ENCODE measurements at regions of chr2 and their contacts with region 1.

Region 1: DNA sequence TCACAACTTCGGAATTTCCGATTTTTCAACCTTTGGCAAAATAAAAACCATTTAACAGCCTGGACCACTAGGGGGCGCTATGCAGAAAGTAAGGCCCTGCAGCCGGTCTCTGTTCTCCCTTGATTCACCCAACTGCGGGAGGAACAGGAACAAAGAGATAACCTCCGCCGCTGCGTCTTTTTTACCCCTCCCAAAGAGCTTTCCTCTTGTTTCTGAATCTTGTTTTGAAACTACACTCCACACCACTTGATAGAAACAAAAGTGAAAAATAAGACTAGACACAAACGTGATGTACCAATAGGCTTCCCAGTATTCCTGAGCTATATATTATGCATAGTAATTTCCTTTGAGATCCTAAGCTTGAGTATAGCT is 231.2 kb downstream of the MYO3B start:
- DNase-seq: no peak
- ATAC-seq: peak; percentile 81
- H3K4me3 ChIP-seq: no peak overlapping the region
- H3K27ac ChIP-seq: no peak overlapping the region
- H3K4me1 ChIP-seq: peaks cover 11% of the 10 kb centered on the region
- H3K27me3 ChIP-seq: no peaks in the 10 kb centered on the region
- CTCF ChIP-seq: peak; percentile 73 to 85 (median 79)
- EP300 ChIP-seq: no peak
- POLR2A ChIP-seq: no peak
- RAD21 ChIP-seq: peak; percentile 68

Region 2: DNA sequence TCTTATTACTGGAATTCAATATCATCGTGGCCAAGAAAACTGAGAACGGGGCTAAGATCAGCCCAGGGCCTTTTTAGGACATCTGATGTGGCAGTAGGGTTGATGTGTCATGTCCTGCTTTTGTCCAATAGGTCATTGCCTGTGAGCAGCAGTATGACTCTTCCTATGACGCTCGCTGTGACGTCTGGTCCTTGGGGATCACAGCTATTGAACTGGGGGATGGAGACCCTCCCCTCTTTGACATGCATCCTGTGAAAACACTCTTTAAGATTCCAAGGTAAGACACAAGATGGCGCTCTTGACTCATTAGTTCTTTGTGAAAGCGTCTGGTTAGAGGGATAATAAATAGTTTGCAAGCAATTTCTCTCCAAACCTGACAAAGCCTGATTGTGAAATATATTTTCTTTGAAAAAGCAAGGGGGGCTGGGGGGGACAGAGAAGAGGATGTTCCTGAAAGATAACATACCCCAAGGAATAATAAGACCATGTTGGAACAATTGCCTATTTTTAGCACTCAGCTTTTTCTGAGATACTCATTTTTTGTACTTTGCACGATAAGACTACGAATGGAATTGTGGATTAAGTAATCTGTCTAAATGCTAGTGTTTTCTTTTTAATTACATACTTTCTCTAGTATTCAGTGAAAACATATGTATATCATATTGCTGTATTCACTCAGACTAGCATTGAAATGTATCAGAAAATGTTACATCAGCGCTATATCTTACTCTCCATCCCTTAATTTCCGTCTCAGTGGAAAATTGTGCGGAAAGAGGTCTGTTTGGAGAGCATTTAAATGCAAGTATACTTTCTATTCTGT is 173.1 kb before region 1 on chr2:
- CTCF ChIA-PET with region 1: interaction called, 10 read pairs
- POLR2A ChIA-PET with region 1: no interaction called
- RAD21 ChIA-PET with region 1: interaction called, 4 read pairs
- SMC1A ChIA-PET with region 1: interaction called, 12 read pairs
- in situ Hi-C with region 1: no loop called
- intact Hi-C with region 1: no loop called
- DNase-seq: no peak
- ATAC-seq: peak; percentile 88
- H3K4me3 ChIP-seq: no peak overlapping the region
- H3K27ac ChIP-seq: no peak overlapping the region
- H3K4me1 ChIP-seq: no peaks in the 10 kb centered on the region
- H3K27me3 ChIP-seq: no peaks in the 10 kb centered on the region
- CTCF ChIP-seq: peak; percentile 62 to 68 (median 65)
- EP300 ChIP-seq: no peak
- POLR2A ChIP-seq: no peak
- RAD21 ChIP-seq: peak; percentile 91

Region 3: DNA sequence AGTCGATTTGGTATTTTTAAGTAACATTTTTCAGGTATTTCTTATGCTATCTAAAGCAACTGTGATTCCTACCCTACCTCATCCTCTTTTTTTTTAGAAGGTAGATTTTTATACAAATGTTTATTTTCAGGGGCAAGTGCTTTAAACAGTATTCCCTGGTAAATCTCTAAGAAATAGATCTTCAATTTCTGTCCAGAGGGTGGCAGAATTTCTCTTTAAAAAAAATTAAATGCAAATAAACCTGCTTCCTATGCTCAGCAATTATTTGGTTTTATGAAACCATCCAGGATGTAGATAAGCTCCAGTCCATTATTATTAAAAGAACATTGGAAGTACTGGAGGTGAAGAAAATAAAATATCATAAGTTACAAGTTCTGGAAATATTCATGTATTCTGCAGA is 39.3 kb before region 1 on chr2:
- CTCF ChIA-PET with region 1: interaction called, 14 read pairs
- POLR2A ChIA-PET with region 1: no interaction called
- RAD21 ChIA-PET with region 1: interaction called, 3 read pairs
- SMC1A ChIA-PET with region 1: interaction called, 3 read pairs
- in situ Hi-C with region 1: no loop called
- intact Hi-C with region 1: no loop called
- DNase-seq: no peak
- ATAC-seq: 0 out of 3 replicates have a peak, but pooled peaks have one; percentile 36
- H3K4me3 ChIP-seq: no peak overlapping the region
- H3K27ac ChIP-seq: no peak overlapping the region
- H3K4me1 ChIP-seq: no peaks in the 10 kb centered on the region; the same call in 1 of the 2 replicates
- H3K27me3 ChIP-seq: no peaks in the 10 kb centered on the region; a peak in 1 of 4 replicates
- CTCF ChIP-seq: peak in 1 of 3 experiments; percentile 36; a peak in 1 of 6 replicates
- EP300 ChIP-seq: no peak
- POLR2A ChIP-seq: no peak
- RAD21 ChIP-seq: peak; percentile 24; the same call in 1 of the 2 replicates

Region 4: GRCh38 chr2:170396799-170397459 is 12.2 kb before region 1 on chr2:
- CTCF ChIA-PET with region 1: interaction called, 26 read pairs
- POLR2A ChIA-PET with region 1: no interaction called
- RAD21 ChIA-PET with region 1: interaction called, 9 read pairs
- SMC1A ChIA-PET with region 1: interaction called, 8 read pairs
- in situ Hi-C with region 1: no loop called
- intact Hi-C with region 1: no loop called
- DNase-seq: no peak
- ATAC-seq: peak; percentile 71
- H3K4me3 ChIP-seq: no peak overlapping the region
- H3K27ac ChIP-seq: no peak overlapping the region
- H3K4me1 ChIP-seq: no peaks in the 10 kb centered on the region; the same call in 1 of the 2 replicates
- H3K27me3 ChIP-seq: no peaks in the 10 kb centered on the region
- CTCF ChIP-seq: peak; percentile 27 to 51 (median 46); a peak in 3 of 6 replicates
- EP300 ChIP-seq: no peak
- POLR2A ChIP-seq: no peak
- RAD21 ChIP-seq: peak; percentile 47

Region 5: GRCh38 chr2:170449034-170449433 is 39.9 kb after region 1 on chr2:
- CTCF ChIA-PET with region 1: interaction called, 11 read pairs
- POLR2A ChIA-PET with region 1: interaction called, 3 read pairs
- RAD21 ChIA-PET with region 1: no interaction called
- SMC1A ChIA-PET with region 1: interaction called, 4 read pairs
- in situ Hi-C with region 1: no loop called
- intact Hi-C with region 1: no loop called
- DNase-seq: no peak
- ATAC-seq: no peak
- H3K4me3 ChIP-seq: no peak overlapping the region
- H3K27ac ChIP-seq: no peak overlapping the region
- H3K4me1 ChIP-seq: no peaks in the 10 kb centered on the region
- H3K27me3 ChIP-seq: no peaks in the 10 kb centered on the region
- CTCF ChIP-seq: no peak
- EP300 ChIP-seq: no peak
- POLR2A ChIP-seq: no peak
- RAD21 ChIP-seq: no peak

Region 6: DNA sequence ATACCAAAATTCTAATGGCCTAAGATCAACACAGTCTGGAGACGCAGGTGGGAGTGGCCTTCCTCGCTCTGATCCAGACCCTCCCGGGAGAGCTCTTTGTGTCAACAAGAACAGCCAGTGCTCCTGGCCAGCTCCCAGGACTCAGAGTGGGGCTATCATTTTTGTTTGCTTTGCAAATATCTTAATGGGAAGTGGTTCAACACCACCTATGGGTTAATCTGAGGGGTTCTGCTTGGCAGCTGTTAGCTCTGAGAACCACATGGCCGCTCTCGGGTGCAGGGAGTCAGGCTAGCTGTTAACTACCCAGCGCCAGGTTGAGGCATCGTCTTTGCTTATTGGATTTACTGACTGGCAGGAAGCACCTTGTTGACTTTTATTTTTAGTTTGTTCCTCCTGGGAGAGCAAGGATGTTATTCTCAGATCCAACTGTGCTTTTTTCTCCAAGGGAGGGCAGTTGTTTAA is 121.2 kb after region 1 on chr2:
- CTCF ChIA-PET with region 1: interaction called, 27 read pairs
- POLR2A ChIA-PET with region 1: no interaction called
- RAD21 ChIA-PET with region 1: interaction called, 10 read pairs
- SMC1A ChIA-PET with region 1: interaction called, 6 read pairs
- in situ Hi-C with region 1: no loop called
- intact Hi-C with region 1: no loop called
- DNase-seq: no peak
- ATAC-seq: peak; percentile 13; the same call in 2 of the 3 replicates
- H3K4me3 ChIP-seq: no peak overlapping the region
- H3K27ac ChIP-seq: no peak overlapping the region
- H3K4me1 ChIP-seq: peaks cover 4% of the 10 kb centered on the region; the same call in 1 of the 2 replicates
- H3K27me3 ChIP-seq: no peaks in the 10 kb centered on the region
- CTCF ChIP-seq: no peak
- EP300 ChIP-seq: no peak
- POLR2A ChIP-seq: no peak
- RAD21 ChIP-seq: no peak

Region 7: DNA sequence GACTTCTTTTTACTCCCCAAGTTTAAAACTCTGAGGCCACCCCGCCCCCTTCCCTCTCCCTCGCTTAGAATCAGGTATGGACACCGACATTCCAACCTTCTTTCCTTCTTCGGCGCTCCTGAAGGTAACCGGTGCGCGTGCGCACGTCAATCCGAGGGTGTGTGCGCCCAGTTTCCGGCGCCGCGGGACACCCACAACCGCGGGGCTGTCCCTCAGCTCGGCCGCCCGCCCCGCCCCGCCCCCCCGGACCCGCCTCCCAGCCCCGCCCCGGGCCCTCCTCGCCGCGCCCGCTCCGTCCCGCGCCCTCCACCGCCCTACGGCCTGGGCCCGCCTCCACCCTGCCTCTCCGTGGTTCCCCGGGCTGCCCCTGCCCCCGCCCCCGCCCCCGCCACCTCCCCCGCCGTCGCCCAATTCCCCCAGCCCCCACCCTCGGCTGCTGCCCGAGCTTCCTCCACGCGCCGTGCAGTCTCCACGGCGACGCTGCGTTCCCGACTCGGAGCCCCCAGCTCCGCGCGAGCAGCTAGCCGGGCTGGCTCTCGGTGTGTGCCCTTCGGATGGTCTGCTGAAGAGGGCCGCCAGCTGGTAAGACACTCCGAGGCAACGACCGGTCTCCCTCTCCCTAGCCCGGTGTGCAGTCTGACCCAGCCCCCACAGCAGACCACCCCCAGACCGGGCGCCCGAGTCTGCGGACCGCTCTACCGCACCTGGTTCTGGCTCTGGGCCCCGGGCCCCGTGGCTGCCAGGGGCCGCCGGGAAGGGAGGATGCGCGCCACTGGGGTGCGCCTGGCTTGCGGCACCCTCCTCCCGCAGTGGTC is 361.7 kb after region 1 on chr2:
- CTCF ChIA-PET with region 1: interaction called, 10 read pairs
- POLR2A ChIA-PET with region 1: no interaction called
- RAD21 ChIA-PET with region 1: interaction called, 11 read pairs
- SMC1A ChIA-PET with region 1: interaction called, 6 read pairs
- in situ Hi-C with region 1: no loop called
- intact Hi-C with region 1: no loop called
- DNase-seq: no peak
- ATAC-seq: peak; percentile 95
- H3K4me3 ChIP-seq: peak overlapping the region; percentile 97
- H3K27ac ChIP-seq: no peak overlapping the region
- H3K4me1 ChIP-seq: no peaks in the 10 kb centered on the region
- H3K27me3 ChIP-seq: peaks cover 0 to 13% of the 10 kb centered on the region in 2 experiments; a peak in 3 of 4 replicates
- CTCF ChIP-seq: no peak
- EP300 ChIP-seq: no peak
- POLR2A ChIP-seq: no peak
- RAD21 ChIP-seq: no peak

Region 8: GRCh38 chr2:171858397-171858958 is 1449.3 kb after region 1 on chr2:
- CTCF ChIA-PET with region 1: no interaction called
- POLR2A ChIA-PET with region 1: no interaction called
- RAD21 ChIA-PET with region 1: no interaction called
- SMC1A ChIA-PET with region 1: no interaction called
- in situ Hi-C with region 1: no loop called
- intact Hi-C with region 1: no loop called
- DNase-seq: no peak
- ATAC-seq: no peak
- H3K4me3 ChIP-seq: no peak overlapping the region
- H3K27ac ChIP-seq: no peak overlapping the region
- H3K4me1 ChIP-seq: no peaks in the 10 kb centered on the region
- H3K27me3 ChIP-seq: no peaks in the 10 kb centered on the region
- CTCF ChIP-seq: no peak
- EP300 ChIP-seq: no peak
- POLR2A ChIP-seq: no peak
- RAD21 ChIP-seq: no peak